IMR-90 (cell line): ENCODE measurements at regions of chr5 and their contacts with region 1.

Region 1: DNA sequence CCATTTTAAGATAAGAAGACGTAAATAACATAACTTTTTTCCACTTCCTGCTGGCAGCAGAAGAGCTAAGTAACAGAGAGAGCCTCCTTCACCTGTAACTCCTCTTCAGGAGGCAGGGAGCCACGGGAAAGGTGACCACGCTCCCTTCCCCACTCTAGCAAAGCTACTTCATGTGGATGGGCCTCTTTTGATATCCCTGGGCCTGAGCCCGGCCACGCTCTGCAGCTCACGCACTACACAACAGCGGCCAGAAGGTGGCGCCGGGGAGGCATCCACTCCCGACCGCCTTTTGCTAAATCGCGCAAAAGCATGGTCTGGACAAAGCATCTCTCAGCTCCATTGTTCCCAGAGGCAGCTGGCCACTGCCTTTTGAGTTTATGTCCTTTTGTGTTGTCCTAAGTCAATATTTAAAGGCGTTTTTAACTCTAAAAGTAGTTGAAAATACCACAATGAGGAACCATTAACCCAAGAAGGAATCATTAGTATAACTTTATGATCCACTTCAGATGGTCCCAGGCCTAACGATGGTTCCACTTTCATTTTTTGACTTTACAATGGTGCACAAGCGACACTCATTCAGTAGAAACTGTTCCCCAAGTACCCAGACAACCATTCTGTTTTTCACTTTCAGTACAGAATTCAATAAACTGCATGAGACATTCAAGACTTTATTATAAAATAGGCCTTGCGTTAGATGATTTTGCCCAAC is 23.6 kb downstream of the CMBL start:
- DNase-seq: peak; percentile 60
- ATAC-seq: peak; percentile 99
- H3K4me3 ChIP-seq: no peak overlapping the region
- H3K27ac ChIP-seq: no peak overlapping the region
- H3K4me1 ChIP-seq: no peaks in the 10 kb centered on the region; the same call in 1 of the 2 replicates
- H3K27me3 ChIP-seq: no peaks in the 10 kb centered on the region
- CTCF ChIP-seq: peak; percentile 92
- POLR2A ChIP-seq: no peak
- RAD21 ChIP-seq: peak; percentile 93

Region 2: GRCh38 chr5:10333154-10334006 is 49.3 kb after region 1 on chr5:
- CTCF ChIA-PET with region 1: interaction called, 4 read pairs
- POLR2A ChIA-PET with region 1: no interaction called
- dilution Hi-C with region 1: no loop called
- in situ Hi-C with region 1: no loop called
- intact Hi-C with region 1: loop called (anchors 5 kb)
- DNase-seq: peak; percentile 26
- ATAC-seq: peak; percentile 66
- H3K4me3 ChIP-seq: peak overlapping the region; percentile 66
- H3K27ac ChIP-seq: peak overlapping the region; percentile 21; the same call in 1 of the 2 replicates
- H3K4me1 ChIP-seq: peaks cover 22% of the 10 kb centered on the region
- H3K27me3 ChIP-seq: peaks cover 5% of the 10 kb centered on the region; the same call in 1 of the 2 replicates
- CTCF ChIP-seq: no peak
- POLR2A ChIP-seq: no peak
- RAD21 ChIP-seq: peak; percentile 30; the same call in 1 of the 2 replicates

Region 3: DNA sequence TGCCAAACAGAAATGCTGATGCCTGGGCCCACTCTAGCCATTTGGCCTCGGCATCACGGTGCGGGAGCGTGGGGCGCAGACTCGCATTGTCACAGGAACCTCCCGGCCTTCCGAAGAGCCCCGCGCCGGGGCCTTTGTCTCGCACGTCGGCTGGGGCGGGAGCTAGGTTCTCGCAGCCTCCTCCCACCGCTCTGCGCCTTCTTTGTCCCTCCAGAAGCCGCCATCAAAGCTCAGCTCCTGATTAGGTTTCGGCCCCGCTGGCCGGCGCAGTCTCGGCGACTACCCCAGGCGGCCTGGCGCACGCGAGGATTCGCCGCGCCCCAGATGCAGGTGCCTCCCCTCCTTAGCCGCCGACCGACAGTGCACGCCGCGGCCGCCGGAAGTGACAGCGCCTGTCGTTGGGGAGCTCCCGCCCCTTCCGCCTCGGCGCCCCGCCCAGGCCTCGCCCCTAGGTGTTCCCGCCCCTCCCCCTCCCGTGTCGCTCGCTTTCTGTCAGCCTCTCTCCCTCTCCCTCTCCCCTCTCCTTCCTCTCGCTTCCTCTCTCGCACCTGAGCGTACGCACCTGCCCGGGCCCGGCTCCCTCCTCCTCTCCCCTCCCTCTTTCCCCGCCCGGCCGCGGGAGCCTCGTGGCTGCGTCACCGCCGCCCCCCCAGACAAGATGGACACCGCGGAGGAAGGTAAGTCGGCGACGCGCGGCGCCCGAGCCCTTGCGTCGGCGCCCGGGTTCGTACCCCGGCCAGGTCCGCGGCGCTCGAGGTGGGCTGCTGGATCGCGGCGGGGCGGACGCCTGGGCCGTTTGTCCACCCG is 69.4 kb after region 1 on chr5 and contains the start of gene MARCHF6:
- CTCF ChIA-PET with region 1: interaction called, 7 read pairs
- POLR2A ChIA-PET with region 1: no interaction called
- dilution Hi-C with region 1: no loop called
- in situ Hi-C with region 1: no loop called
- intact Hi-C with region 1: loop called (anchors 2 kb)
- DNase-seq: peak; percentile 84
- ATAC-seq: peak; percentile 90
- H3K4me3 ChIP-seq: peak within 1 kb of the TSS; percentile 92
- H3K27ac ChIP-seq: peak within 1 kb of the TSS; percentile 99
- H3K4me1 ChIP-seq: peaks cover 10% of the 10 kb centered on the region
- H3K27me3 ChIP-seq: no peaks in the 10 kb centered on the region
- CTCF ChIP-seq: no peak
- POLR2A ChIP-seq: peak; percentile 89
- RAD21 ChIP-seq: no peak
- total RNA-seq, gene MARCHF6: 55.2 and 71.4 TPM in 2 replicates

Region 4: GRCh38 chr5:10401498-10401897 is 117.4 kb after region 1 on chr5:
- CTCF ChIA-PET with region 1: interaction called, 3 read pairs
- POLR2A ChIA-PET with region 1: no interaction called
- dilution Hi-C with region 1: no loop called
- in situ Hi-C with region 1: no loop called
- intact Hi-C with region 1: loop called (anchors 2 kb)
- DNase-seq: no peak
- ATAC-seq: no peak
- H3K4me3 ChIP-seq: no peak overlapping the region
- H3K27ac ChIP-seq: no peak overlapping the region
- H3K4me1 ChIP-seq: no peaks in the 10 kb centered on the region
- H3K27me3 ChIP-seq: no peaks in the 10 kb centered on the region
- CTCF ChIP-seq: no peak
- POLR2A ChIP-seq: no peak
- RAD21 ChIP-seq: no peak

Region 5: DNA sequence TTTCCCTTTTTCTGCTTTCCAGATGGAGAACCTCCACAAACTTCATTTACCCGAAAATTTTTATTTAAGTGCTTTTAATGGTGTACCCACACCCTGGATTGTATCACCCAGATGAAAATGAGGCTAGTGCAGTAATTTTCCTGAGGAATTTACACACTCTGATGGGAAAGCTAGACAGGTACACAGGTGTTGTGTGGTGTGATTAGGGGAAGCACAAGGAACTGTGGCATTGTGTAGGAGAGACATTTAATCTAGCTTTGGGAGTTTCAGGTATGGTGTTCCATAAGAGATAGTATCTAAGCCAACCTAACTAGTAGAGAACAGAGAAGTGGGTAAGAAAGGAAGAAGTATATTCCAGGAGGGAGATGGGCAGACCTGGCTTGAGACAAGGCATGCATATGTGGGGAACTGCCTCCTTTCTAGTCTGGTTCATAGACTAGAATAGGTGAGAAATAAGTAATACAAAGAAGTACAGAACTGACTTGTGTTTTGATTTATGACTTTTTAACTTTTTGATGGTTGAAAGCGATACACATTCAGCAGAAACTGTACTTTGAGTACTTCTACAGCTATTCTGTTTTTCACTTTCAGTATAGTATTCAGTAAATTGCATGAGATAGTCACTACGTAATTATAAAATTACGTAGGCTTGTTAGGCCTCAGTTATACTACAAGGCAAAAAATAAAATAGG is 134.7 kb after region 1 on chr5:
- CTCF ChIA-PET with region 1: interaction called, 33 read pairs
- POLR2A ChIA-PET with region 1: no interaction called
- dilution Hi-C with region 1: no loop called
- in situ Hi-C with region 1: loop called (anchors 5 kb)
- intact Hi-C with region 1: no loop called
- DNase-seq: no peak
- ATAC-seq: no peak
- H3K4me3 ChIP-seq: no peak overlapping the region
- H3K27ac ChIP-seq: no peak overlapping the region
- H3K4me1 ChIP-seq: peaks cover 10% of the 10 kb centered on the region
- H3K27me3 ChIP-seq: no peaks in the 10 kb centered on the region
- CTCF ChIP-seq: no peak
- POLR2A ChIP-seq: no peak
- RAD21 ChIP-seq: no peak

Region 6: DNA sequence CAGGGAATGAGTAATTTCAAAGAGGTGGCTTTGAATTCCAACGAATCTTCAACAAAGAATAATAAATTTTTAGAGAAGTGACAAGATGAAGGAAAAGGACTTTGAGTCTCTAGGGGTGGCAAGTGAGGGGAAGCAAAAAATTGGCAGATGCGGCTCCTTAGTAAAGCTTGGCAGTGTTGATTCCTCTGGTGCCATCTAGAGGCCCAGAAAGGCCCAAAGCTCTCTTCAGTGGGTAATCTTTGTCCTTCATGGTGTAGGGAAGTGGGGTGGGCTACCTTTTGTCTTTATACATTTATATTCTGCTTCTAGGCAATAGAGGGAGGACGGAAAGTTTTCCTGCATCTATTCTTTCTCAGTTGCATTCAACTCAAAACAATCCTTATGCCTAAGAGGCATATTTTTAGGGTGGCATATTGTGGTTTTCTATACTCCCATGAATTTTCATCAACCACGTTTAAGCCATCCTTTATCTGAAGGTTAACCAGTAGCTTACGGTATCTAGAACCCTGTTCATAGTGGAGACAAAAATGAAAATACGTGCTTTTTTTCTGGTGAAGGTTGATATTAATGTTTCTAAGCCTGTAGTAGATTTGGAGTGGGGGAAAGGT is 140.1 kb after region 1 on chr5:
- CTCF ChIA-PET with region 1: interaction called, 33 read pairs
- POLR2A ChIA-PET with region 1: no interaction called
- dilution Hi-C with region 1: no loop called
- in situ Hi-C with region 1: loop called (anchors 5 kb)
- intact Hi-C with region 1: loop called (anchors 1 kb)
- DNase-seq: peak; percentile 44
- ATAC-seq: 0 out of 2 replicates have a peak, but pooled peaks have one; percentile 33
- H3K4me3 ChIP-seq: no peak overlapping the region
- H3K27ac ChIP-seq: no peak overlapping the region
- H3K4me1 ChIP-seq: peaks cover 10% of the 10 kb centered on the region
- H3K27me3 ChIP-seq: no peaks in the 10 kb centered on the region
- CTCF ChIP-seq: peak; percentile 52
- POLR2A ChIP-seq: no peak
- RAD21 ChIP-seq: peak; percentile 56

Region 7: DNA sequence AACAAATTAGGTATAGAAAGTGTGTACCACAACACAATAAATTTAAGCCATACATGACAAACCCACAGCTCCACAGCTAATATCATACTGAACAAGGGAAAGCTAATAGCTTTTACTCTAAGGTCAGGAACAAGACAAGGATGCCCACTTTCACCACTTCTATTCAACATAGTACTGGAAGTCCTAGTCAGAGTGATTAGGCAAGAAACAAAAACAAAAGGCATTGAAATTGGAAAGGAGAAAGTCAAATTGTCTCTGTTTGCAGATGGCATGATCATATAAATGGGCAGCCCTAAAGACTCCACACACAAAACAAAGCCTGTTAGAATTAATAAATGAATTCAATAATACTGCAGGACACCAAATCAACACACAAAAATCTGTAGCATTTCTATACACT is 1071.4 kb after region 1 on chr5:
- CTCF ChIA-PET with region 1: no interaction called
- POLR2A ChIA-PET with region 1: no interaction called
- dilution Hi-C with region 1: no loop called
- in situ Hi-C with region 1: no loop called
- intact Hi-C with region 1: no loop called
- DNase-seq: no peak
- ATAC-seq: no peak
- H3K4me3 ChIP-seq: no peak overlapping the region
- H3K27ac ChIP-seq: no peak overlapping the region
- H3K4me1 ChIP-seq: no peaks in the 10 kb centered on the region
- H3K27me3 ChIP-seq: no peaks in the 10 kb centered on the region
- CTCF ChIP-seq: no peak
- POLR2A ChIP-seq: no peak
- RAD21 ChIP-seq: no peak